ENCODE measurements at regions of chr11 and their contacts with region 1.

Region 1: GRCh38 chr11:62025487-62026105 is 58.2 kb upstream of the FTH1 start:
- DNase-seq: peak; percentile 34 to 76
- ATAC-seq: peak; percentile 82 to 97 (median 94)
- H3K4me3 ChIP-seq: peak overlapping the region in 6 of 10 donors; percentile 3 to 31 (median 16)
- H3K27ac ChIP-seq: peak overlapping the region in 9 of 10 donors; percentile 41 to 92 (median 70)
- H3K4me1 ChIP-seq: peaks cover 0 to 32% (median 8%) of the 10 kb centered on the region in 9 donors
- H3K27me3 ChIP-seq: no peaks in the 10 kb centered on the region
- CTCF ChIP-seq: no peak

Region 2: GRCh38 chr11:61978703-61979661 is 46.6 kb before region 1 on chr11:
- intact Hi-C with region 1: loop called in 4 of 10 experiments (anchors 5 to 10 kb)
- DNase-seq: peak in 1 of 2 donors; percentile 36
- ATAC-seq: peak; percentile 30 to 85 (median 62)
- H3K4me3 ChIP-seq: no peak overlapping the region
- H3K27ac ChIP-seq: peak overlapping the region; percentile 51 to 89 (median 81)
- H3K4me1 ChIP-seq: peaks cover 10 to 54% (median 39%) of the 10 kb centered on the region in 9 donors
- H3K27me3 ChIP-seq: no peaks in the 10 kb centered on the region
- CTCF ChIP-seq: no peak

Measured in heart right ventricle (tissue), 16 donors.